Endothelial cell of umbilical vein (primary cell): ENCODE measurements at regions of chr18 and their contacts with region 1.

Region 1: DNA sequence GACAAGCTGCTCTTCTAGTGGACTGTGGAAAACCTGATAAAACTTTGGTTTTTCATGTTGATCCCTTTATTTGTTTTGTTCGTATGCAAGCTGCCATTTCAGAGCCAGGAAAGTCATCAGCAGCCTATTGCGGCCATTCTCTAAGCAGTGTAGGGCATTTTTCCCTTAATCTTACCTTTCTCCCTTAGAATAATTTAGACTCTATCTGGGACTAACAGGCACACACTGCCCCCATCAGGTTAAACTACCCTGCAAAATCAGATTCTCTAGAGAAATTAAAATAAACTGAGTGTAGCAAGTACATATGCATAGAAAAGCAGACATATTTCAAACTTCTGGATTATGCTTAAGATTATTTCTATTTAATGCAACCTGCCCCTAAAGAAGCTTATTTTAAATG is 347.5 kb downstream of the METTL4 start:
- DNase-seq: peak; percentile 65
- H3K4me3 ChIP-seq: peak overlapping the region in 2 of 3 experiments; percentile 19
- H3K27ac ChIP-seq: no peak overlapping the region
- H3K4me1 ChIP-seq: peaks cover 3% of the 10 kb centered on the region
- H3K27me3 ChIP-seq: no peaks in the 10 kb centered on the region
- CTCF ChIP-seq: peak in 1 of 2 donors; percentile 38
- POLR2A ChIP-seq: no peak

Region 2: GRCh38 chr18:1585879-1586488 is 637.9 kb before region 1 on chr18:
- CTCF ChIA-PET with region 1: interaction called, 16 read pairs
- POLR2A ChIA-PET with region 1: no interaction called
- dilution Hi-C with region 1: no loop called
- intact Hi-C with region 1: loop called (anchors 1 kb)
- DNase-seq: peak; percentile 42
- H3K4me3 ChIP-seq: no peak overlapping the region
- H3K27ac ChIP-seq: no peak overlapping the region
- H3K4me1 ChIP-seq: no peaks in the 10 kb centered on the region
- H3K27me3 ChIP-seq: no peaks in the 10 kb centered on the region
- CTCF ChIP-seq: peak in 1 of 2 donors; percentile 23
- POLR2A ChIP-seq: no peak

Region 3: DNA sequence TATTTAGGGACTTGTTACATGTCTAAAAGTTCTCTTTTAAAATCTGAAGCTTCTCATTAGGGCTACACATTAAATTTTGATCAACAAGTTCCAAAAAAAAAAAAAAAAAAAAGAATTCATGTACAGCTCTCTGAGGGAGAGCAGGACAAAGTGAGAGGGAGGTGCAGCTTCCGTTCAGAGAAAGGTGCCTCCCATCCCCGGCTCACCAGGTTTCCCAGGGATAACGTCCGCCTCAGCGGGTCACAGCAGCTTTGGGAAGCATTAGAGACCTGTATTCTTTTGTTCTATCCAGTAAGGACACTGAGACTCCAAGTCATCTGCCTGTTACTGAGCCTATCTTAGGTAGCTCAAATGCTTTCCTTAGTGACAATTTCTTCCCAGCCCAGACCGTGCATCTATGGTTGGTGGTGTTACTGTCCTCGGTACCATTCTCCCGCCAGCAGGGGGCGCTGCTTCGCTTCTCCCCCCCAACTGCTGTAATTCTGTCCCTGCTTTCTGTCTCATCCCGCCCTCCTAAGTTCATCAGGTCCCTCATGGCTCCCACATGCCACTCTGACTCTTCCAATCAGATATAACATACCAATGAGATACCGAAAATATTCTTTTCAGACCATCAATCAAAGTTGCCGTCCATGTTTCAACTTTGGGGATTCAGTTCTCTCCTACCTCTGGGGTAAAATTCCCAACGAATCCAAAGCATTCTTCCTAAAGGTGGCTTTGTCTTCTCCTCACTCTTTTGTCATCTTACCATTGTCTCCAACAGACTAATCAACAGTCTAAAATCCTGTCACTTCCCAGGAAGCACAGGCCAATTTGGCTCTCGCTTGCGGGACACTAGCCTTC is 119.0 kb before region 1 on chr18:
- CTCF ChIA-PET with region 1: interaction called, 43 read pairs
- POLR2A ChIA-PET with region 1: no interaction called
- dilution Hi-C with region 1: no loop called
- intact Hi-C with region 1: loop called (anchors 1 kb)
- DNase-seq: peak; percentile 58
- H3K4me3 ChIP-seq: no peak overlapping the region
- H3K27ac ChIP-seq: no peak overlapping the region
- H3K4me1 ChIP-seq: no peaks in the 10 kb centered on the region
- H3K27me3 ChIP-seq: peaks cover 0 to 2% of the 10 kb centered on the region in 2 experiments
- CTCF ChIP-seq: peak; percentile 75 to 87
- POLR2A ChIP-seq: no peak

Region 4: DNA sequence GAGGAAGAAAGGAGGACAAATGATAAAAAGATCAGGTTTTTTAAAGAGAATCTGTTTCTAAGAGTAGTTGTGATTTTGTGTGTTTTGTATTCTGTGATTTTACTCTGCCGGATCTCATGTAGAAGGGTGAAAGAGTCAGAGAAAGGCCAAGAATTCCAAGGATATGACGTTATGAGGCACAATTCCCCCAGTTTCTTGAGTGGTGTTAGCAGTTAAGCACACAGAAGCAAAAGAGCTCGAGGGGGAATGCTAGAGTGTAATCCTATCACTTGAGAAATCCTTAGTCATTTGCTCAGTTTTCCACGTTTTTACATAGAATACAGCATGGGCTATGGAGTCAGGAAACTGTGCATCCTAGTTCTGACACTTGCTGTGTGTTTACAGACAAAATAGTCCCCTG is 312.6 kb after region 1 on chr18:
- CTCF ChIA-PET with region 1: interaction called, 13 read pairs
- POLR2A ChIA-PET with region 1: no interaction called
- dilution Hi-C with region 1: no loop called
- intact Hi-C with region 1: loop called (anchors 5 kb)
- DNase-seq: no peak
- H3K4me3 ChIP-seq: no peak overlapping the region
- H3K27ac ChIP-seq: no peak overlapping the region
- H3K4me1 ChIP-seq: no peaks in the 10 kb centered on the region
- H3K27me3 ChIP-seq: no peaks in the 10 kb centered on the region
- CTCF ChIP-seq: no peak
- POLR2A ChIP-seq: no peak